HAP-1 (cell line): ENCODE measurements at regions of chr1 and their contacts with region 1.

Region 1: GRCh38 chr1:52127181-52128180 is 14.4 kb upstream of the ZFYVE9 start:
- DNase-seq: peak; percentile 67 to 79
- H3K4me3 ChIP-seq: no peak overlapping the region
- H3K4me1 ChIP-seq: no peaks in the 10 kb centered on the region
- H3K27me3 ChIP-seq: peaks cover 8% of the 10 kb centered on the region; the same call in 1 of the 2 replicates

Region 2: GRCh38 chr1:52296345-52296744 is 168.9 kb after region 1 on chr1:
- in situ Hi-C with region 1: loop called (anchors 10 kb)
- DNase-seq: peak; percentile 26 to 67
- H3K4me3 ChIP-seq: no peak overlapping the region
- H3K4me1 ChIP-seq: no peaks in the 10 kb centered on the region
- H3K27me3 ChIP-seq: no peaks in the 10 kb centered on the region

Region 3: GRCh38 chr1:52511851-52512615 is 384.6 kb after region 1 on chr1:
- in situ Hi-C with region 1: no loop called
- DNase-seq: no peak
- H3K4me3 ChIP-seq: no peak overlapping the region
- H3K4me1 ChIP-seq: no peaks in the 10 kb centered on the region; the same call in 1 of the 2 replicates
- H3K27me3 ChIP-seq: no peaks in the 10 kb centered on the region

Region 4: GRCh38 chr1:52683367-52683940 is 556.0 kb after region 1 on chr1:
- in situ Hi-C with region 1: loop called (anchors 10 kb)
- DNase-seq: no peak
- H3K4me3 ChIP-seq: no peak overlapping the region
- H3K4me1 ChIP-seq: no peaks in the 10 kb centered on the region
- H3K27me3 ChIP-seq: no peaks in the 10 kb centered on the region